ENCODE measurements at regions of chr22 and their contacts with region 1.

Region 1: GRCh38 chr22:29306175-29306834 is at the start of gene GAS2L1:
- DNase-seq: peak; percentile 92
- total RNA-seq, gene GAS2L1: 13.0 TPM

Region 2: GRCh38 chr22:29267858-29268417 is 38.4 kb before region 1 on chr22 and contains the starts of genes EWSR1 and RHBDD3:
- intact Hi-C with region 1: loop called (anchors 2 kb)
- DNase-seq: peak; percentile 98
- total RNA-seq, gene EWSR1: 138 TPM
- total RNA-seq, gene RHBDD3: 16.7 TPM

Region 3: DNA sequence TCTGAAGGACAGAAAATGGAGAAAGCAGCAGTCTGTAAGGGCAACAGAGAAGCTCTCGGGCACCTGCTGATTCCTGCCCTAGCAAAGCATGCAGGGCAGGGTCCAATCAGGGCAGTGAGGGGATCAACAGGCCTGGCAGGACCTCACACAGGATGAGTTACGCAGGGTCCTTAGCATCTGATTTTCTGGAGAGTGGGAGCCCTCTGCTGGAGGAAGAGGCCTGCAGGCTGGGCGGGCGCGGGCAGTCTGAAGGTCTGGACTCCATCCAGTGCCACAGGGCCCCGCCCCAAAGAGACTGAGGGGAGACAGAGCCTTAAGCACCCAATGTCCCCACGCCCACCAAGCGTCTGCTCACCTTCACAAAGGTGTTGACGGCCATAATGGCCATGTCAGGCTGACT is 53.2 kb after region 1 on chr22:
- intact Hi-C with region 1: loop called (anchors 5 kb)
- DNase-seq: no peak

Region 4: GRCh38 chr22:29387921-29388758 is 81.8 kb after region 1 on chr22 and contains the start of gene AP1B1:
- intact Hi-C with region 1: loop called (anchors 2 kb)
- DNase-seq: peak; percentile 98
- total RNA-seq, gene AP1B1: 28.0 TPM